ENCODE measurements at regions of chr11 and their contacts with region 1.

Region 1: GRCh38 chr11:69524282-69524911 is 42.9 kb downstream of the LINC01488 start:
- DNase-seq: no peak
- H3K4me3 ChIP-seq: no peak overlapping the region
- H3K27ac ChIP-seq: no peak overlapping the region
- H3K4me1 ChIP-seq: peaks cover 5 to 26% (median 10%) of the 10 kb centered on the region in 4 experiments
- H3K27me3 ChIP-seq: peaks cover 0 to 10% (median 1%) of the 10 kb centered on the region in 4 experiments; a peak in 3 of 7 replicates
- CTCF ChIP-seq: no peak
- EP300 ChIP-seq: no peak
- POLR2A ChIP-seq: no peak
- RAD21 ChIP-seq: no peak

Region 2: DNA sequence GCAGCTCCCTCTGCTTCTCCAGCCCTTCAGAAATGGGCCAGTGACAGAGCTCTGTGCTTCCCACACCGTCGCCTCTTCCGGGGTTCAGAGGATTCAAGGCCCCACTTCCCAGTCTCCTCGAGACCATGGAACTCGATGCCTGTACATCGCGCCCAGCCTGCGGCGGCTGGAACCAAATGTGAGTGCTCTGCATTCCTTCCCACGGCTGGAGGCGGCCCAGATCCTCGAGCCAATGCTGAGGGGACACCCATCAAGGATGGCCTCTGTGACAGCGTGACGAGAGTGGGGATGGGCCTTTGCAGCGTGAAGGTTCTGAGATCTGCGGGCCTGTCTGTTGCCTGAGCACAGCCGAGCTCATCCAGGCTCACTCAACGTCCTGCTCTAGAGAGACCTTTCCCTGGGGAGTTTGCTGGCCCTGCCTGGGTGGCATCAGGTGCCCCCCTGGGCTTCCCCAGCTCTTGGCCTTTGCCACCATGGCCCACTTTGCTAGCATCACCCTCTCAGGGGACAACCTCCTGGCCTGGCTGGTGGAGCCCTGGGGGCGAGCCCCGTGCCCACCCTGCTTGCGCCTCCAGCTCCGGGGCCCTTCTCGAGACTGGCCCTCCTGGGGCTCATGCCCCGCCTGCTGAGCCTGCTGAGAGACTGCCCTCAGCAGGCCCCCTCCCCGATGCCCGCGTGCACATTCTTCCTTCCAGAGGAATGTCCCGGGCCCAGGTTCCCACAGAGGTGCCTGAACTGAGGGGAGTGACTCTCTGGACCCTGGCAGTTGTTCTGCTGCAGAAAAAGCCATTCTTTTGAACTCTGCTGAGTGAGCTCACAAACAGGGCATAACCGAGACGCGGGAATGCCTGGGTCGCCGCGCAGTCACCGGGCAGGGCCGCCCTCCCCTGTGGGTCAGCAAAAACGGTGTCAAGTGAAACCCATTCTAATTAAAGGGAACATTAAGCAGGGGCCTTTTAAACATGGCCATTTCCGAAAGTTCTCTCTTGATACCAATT is 237.7 kb before region 1 on chr11:
- CTCF ChIA-PET with region 1: no interaction called
- POLR2A ChIA-PET with region 1: no interaction called
- DNase-seq: no peak
- H3K4me3 ChIP-seq: no peak overlapping the region
- H3K27ac ChIP-seq: no peak overlapping the region
- H3K4me1 ChIP-seq: peaks cover 0 to 14% (median 8%) of the 10 kb centered on the region in 4 experiments; a peak in 6 of 7 replicates
- H3K27me3 ChIP-seq: peaks cover 0 to 2% (median 0%) of the 10 kb centered on the region in 4 experiments; a peak in 1 of 7 replicates
- CTCF ChIP-seq: no peak
- EP300 ChIP-seq: no peak
- POLR2A ChIP-seq: no peak
- RAD21 ChIP-seq: no peak

Region 3: DNA sequence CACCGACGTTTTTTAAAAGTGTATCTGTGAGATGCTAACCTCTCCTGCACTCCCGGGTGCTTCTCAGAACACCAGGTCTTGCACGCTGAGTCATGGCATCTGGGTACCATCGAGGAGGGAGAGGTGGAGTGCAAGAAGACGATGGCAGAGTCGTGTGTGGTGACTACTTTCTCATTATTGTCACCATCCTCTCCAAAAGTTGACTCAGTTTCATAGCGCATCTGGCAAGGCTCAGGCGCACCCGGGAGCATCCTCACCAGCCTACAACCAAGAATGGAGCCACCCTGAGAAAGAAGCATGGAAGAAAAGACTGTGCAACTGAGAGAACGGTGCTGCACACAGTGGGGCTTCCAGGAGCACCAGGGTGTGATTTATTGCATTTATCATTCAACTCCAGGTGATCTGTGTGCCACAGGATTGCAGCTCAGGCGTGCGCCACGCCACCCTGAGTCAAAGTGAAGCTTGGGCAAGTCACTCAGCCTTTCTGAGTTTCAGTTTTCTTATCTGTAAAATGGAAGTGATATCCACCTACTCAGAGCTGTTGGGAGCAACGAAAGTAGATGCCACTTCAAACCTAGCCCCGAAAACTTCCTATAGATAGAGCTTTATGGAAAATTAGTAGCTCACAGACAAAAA is 22.5 kb after region 1 on chr11:
- CTCF ChIA-PET with region 1: no interaction called
- POLR2A ChIA-PET with region 1: no interaction called
- DNase-seq: no peak
- H3K4me3 ChIP-seq: no peak overlapping the region
- H3K27ac ChIP-seq: no peak overlapping the region
- H3K4me1 ChIP-seq: no peaks in the 10 kb centered on the region; a peak in 1 of 7 replicates
- H3K27me3 ChIP-seq: no peaks in the 10 kb centered on the region
- CTCF ChIP-seq: no peak
- EP300 ChIP-seq: no peak
- POLR2A ChIP-seq: no peak
- RAD21 ChIP-seq: no peak

Region 4: DNA sequence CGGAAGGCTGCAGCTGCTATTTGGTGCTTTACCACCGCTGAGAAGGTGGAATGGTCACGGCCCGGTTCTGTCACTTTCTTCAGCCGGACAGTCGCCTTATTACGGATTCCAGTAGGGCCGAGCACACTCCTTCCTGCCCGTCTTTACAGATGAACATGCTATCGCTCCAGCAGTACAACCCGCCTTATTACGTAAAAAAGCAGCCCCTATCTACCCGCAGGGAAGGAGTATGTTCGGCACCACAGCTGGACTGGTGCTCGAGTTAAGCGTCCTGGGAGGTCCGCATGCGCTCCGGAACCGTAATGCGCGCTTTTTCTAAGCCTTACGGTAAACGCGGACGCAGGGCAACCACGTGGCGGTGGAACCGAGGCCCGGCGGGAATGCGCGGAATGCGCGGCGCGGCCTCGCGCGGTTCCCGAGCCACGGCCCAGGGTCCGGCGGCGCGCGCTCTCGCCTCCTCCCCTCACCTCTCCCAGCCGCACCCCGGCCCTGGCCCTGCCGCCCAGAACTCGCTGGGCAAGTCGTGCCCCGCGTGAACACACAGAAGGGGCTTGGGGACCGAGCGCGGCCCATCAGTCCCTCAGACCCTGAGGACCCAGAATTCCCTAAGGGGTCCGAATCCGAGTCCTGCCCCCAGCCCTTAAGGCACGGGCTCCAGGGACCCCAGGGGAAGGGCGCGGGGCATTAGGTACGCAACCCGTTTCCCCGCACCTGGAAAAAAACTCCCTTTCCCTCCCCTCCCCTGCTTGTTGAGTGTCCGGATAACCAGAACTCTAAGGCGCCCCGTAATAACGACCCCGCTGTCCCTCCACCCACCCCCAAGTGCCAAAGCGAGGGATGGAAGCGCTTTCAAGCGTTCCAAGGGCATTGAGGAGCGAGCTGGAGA is 112.2 kb after region 1 on chr11:
- CTCF ChIA-PET with region 1: interaction called, 3 read pairs
- POLR2A ChIA-PET with region 1: interaction called, 12 read pairs
- DNase-seq: peak; percentile 41 to 89
- H3K4me3 ChIP-seq: peak overlapping the region; percentile 45 to 97 (median 49)
- H3K27ac ChIP-seq: no peak overlapping the region
- H3K4me1 ChIP-seq: peaks cover 4 to 17% (median 10%) of the 10 kb centered on the region in 4 experiments
- H3K27me3 ChIP-seq: peaks cover 0 to 34% (median 22%) of the 10 kb centered on the region in 4 experiments; a peak in 5 of 7 replicates
- CTCF ChIP-seq: no peak
- EP300 ChIP-seq: no peak
- POLR2A ChIP-seq: no peak
- RAD21 ChIP-seq: 0 out of 4 replicates have a peak, but pooled peaks have one; percentile 3 to 14

Measured in H1 (cell line).